H1 (cell line): ENCODE measurements at regions of chr1 and their contacts with region 1.

Region 1: GRCh38 chr1:205791568-205792180 is 16.4 kb upstream of the RAB29 start:
- DNase-seq: peak in 1 of 2 experiments; percentile 70
- H3K4me3 ChIP-seq: no peak overlapping the region
- H3K27ac ChIP-seq: no peak overlapping the region
- H3K4me1 ChIP-seq: no peaks in the 10 kb centered on the region
- H3K27me3 ChIP-seq: no peaks in the 10 kb centered on the region
- CTCF ChIP-seq: peak; percentile 82 to 84 (median 84)
- EP300 ChIP-seq: no peak
- POLR2A ChIP-seq: no peak
- RAD21 ChIP-seq: peak; percentile 93 to 95

Region 2: DNA sequence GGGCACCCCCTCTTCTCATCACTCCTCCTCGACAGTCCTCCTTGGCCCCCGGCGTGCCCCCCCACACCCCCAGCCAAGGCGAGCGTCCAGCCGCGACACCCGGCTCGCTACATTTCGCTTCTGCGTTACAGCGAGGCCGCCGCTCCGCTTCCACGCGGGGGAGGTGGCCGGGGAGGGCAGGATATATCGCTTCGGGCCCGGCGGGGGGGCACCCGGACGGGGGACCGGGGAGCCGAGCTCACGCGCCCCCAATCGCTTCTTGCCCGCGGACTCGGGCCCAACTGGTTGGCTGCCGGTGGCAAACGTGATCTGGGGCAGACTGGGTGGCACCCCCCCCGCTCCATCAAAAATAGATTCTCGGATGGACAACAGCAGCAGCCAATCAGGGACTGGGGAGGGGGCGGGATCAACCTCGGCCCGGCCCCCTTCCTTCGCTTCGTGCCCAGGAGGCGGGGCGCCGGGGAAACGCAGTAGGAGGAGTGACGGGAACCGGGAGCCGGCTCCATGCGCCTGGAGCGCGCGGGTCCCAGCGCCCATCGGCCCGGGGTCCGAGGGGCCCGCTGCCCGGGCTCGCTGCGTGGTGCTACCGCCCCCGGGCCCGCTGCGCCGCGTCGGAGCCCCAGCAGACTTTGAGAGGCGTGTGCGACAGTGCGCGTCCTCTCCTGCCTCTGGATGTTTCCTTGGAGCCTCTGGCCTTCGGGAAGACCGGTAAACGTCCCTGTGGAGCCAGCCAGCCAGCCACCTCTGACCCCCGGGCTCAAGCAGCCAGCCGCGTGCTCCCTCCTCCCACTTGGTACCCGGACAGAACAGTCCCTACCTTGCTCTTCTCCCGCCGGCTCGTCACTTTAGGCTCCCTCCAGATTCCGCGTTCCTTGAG is 21.4 kb after region 1 on chr1 and contains the start of gene SLC41A1:
- CTCF ChIA-PET with region 1: interaction called, 79 read pairs
- POLR2A ChIA-PET with region 1: interaction called, 4 read pairs
- DNase-seq: peak; percentile 74 to 94
- H3K4me3 ChIP-seq: peak within 1 kb of the TSS; percentile 49 to 94 (median 64)
- H3K27ac ChIP-seq: peak within 1 kb of the TSS; percentile 26; the same call in 1 of the 2 replicates
- H3K4me1 ChIP-seq: peaks cover 2 to 7% (median 6%) of the 10 kb centered on the region in 4 experiments; a peak in 5 of 7 replicates
- H3K27me3 ChIP-seq: peaks cover 0 to 3% (median 0%) of the 10 kb centered on the region in 4 experiments; a peak in 2 of 7 replicates
- CTCF ChIP-seq: no peak
- EP300 ChIP-seq: no peak
- POLR2A ChIP-seq: peak; percentile 50 to 92
- RAD21 ChIP-seq: no peak
- total RNA-seq, gene SLC41A1: 42.3 and 43.2 TPM in 2 replicates

Region 3: DNA sequence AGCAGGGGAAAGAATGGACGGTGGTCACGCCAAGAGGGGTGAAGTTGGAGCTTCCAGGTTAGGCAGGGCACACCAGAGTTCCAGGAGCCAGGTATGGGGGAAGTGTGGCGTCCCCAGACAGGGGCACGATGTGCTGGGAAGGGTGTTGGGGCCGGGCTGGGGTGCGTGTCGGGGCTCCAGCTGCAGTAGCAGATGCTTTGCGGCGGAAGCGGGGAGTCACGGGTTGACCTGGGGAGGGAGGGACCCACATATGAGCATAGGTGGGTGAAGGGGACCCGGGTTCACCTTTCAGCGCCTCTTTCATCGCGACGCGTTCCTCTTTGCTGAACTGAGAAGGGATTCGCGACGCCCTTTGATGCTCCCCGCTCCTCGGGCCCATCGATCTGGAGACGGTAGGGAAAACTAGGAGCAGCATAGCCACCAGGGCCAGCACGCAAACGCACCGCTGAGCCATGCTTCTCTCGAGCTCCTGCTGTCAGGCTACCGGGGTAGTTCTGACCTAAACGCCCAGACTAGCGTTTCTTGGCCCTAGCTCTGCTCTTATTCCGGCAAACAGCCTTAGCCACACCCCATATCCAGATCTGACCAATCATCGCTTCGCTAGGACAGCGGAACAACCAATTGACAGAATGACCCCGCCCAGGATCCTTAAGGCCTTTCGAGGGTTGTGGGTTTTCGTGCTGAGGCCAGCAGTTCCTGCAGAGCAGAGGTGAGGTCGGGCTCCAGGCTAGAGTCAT is 58.1 kb after region 1 on chr1 and contains the start of gene PM20D1:
- CTCF ChIA-PET with region 1: interaction called, 11 read pairs
- POLR2A ChIA-PET with region 1: no interaction called
- DNase-seq: peak; percentile 19 to 54
- H3K4me3 ChIP-seq: peak within 1 kb of the TSS in 1 of 4 experiments; percentile 16; a peak in 1 of 8 replicates
- H3K27ac ChIP-seq: no peak within 1 kb of the TSS
- H3K4me1 ChIP-seq: no peaks in the 10 kb centered on the region
- H3K27me3 ChIP-seq: no peaks in the 10 kb centered on the region; a peak in 2 of 7 replicates
- CTCF ChIP-seq: no peak
- EP300 ChIP-seq: no peak
- POLR2A ChIP-seq: no peak
- RAD21 ChIP-seq: no peak
- total RNA-seq, gene PM20D1: not detected in 2 replicates

Region 4: GRCh38 chr1:205907794-205908193 is 116.1 kb after region 1 on chr1:
- CTCF ChIA-PET with region 1: interaction called, 68 read pairs
- POLR2A ChIA-PET with region 1: interaction called, 6 read pairs
- DNase-seq: no peak
- H3K4me3 ChIP-seq: no peak overlapping the region
- H3K27ac ChIP-seq: no peak overlapping the region
- H3K4me1 ChIP-seq: no peaks in the 10 kb centered on the region
- H3K27me3 ChIP-seq: no peaks in the 10 kb centered on the region
- CTCF ChIP-seq: peak; percentile 70 to 79 (median 71)
- EP300 ChIP-seq: no peak
- POLR2A ChIP-seq: no peak
- RAD21 ChIP-seq: peak; percentile 71 to 79

Region 5: GRCh38 chr1:205998457-205999241 is 207.0 kb after region 1 on chr1:
- CTCF ChIA-PET with region 1: interaction called, 12 read pairs
- POLR2A ChIA-PET with region 1: no interaction called
- DNase-seq: no peak
- H3K4me3 ChIP-seq: no peak overlapping the region
- H3K27ac ChIP-seq: no peak overlapping the region
- H3K4me1 ChIP-seq: peaks cover 0 to 7% (median 3%) of the 10 kb centered on the region in 4 experiments; a peak in 3 of 7 replicates
- H3K27me3 ChIP-seq: peaks cover 6 to 22% (median 17%) of the 10 kb centered on the region in 4 experiments
- CTCF ChIP-seq: no peak
- EP300 ChIP-seq: no peak
- POLR2A ChIP-seq: no peak
- RAD21 ChIP-seq: no peak

Region 6: GRCh38 chr1:206012086-206012859 is 220.6 kb after region 1 on chr1:
- CTCF ChIA-PET with region 1: no interaction called
- POLR2A ChIA-PET with region 1: no interaction called
- DNase-seq: no peak
- H3K4me3 ChIP-seq: no peak overlapping the region
- H3K27ac ChIP-seq: no peak overlapping the region
- H3K4me1 ChIP-seq: no peaks in the 10 kb centered on the region
- H3K27me3 ChIP-seq: 0 out of 7 replicates have a peak, but pooled peaks cover 0 to 1% (median 0%) of the 10 kb centered on the region in 4 experiments
- CTCF ChIP-seq: no peak
- EP300 ChIP-seq: no peak
- POLR2A ChIP-seq: no peak
- RAD21 ChIP-seq: no peak